ENCODE measurements at regions of chr16 and their contacts with region 1.

Region 1: DNA sequence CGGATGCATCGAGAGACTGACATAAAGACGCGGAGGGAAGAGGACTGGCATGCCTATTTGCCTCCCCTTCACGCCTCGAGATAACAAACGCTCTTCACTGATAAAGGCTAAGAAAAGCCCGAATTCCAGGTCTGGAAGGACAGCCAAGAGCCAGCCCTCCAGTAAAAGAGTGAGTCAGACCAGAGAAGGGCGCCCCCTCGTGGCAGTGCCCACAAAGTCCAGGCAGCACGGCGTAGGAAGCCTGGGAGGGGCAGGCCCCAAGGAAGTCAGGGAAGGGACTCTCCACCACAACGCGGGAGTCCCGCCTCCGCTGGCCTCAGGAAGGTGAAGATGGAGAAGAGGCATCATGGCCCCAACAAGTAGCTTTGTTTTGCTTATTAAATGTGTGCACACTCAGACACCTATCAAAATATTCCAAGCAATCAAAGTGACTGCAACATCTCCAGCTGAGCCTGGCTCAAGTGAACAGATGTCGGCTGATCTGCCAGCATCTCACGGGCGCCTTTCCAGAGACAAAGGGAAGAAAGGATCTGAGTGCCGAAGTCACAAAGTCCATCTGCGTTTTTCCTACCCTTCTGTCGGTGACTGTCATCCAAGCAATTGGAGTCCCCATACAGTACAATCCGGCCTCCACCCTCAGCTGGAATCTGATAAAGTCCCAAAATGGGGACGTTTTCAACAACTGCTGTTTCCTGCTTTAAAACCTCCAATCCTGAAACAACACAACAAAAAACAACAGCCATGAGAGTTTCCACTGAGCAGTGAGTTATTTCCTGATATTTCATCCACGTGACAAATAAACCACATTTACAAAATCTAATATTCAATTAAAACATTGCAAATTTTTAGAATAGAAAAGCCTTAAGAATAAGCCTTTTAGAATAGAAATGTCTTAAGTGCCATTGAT is 20.4 kb upstream of the SLC38A8 start:
- DNase-seq: peak; percentile 85
- ATAC-seq: peak; percentile 94
- H3K4me3 Mint-ChIP-seq: no peak overlapping the region
- H3K27ac Mint-ChIP-seq: no peak overlapping the region
- H3K4me1 Mint-ChIP-seq: no peaks in the 10 kb centered on the region
- H3K27me3 Mint-ChIP-seq: no peaks in the 10 kb centered on the region

Region 2: GRCh38 chr16:83826146-83826913 is 236.7 kb before region 1 on chr16:
- CTCF ChIA-PET with region 1: interaction called, 6 read pairs
- POLR2A ChIA-PET with region 1: no interaction called
- intact Hi-C with region 1: loop called (anchors 1 to 10 kb)
- DNase-seq: peak; percentile 89
- ATAC-seq: peak; percentile 97
- H3K4me3 Mint-ChIP-seq: no peak overlapping the region
- H3K27ac Mint-ChIP-seq: no peak overlapping the region
- H3K4me1 Mint-ChIP-seq: peaks cover 4% of the 10 kb centered on the region
- H3K27me3 Mint-ChIP-seq: peaks cover 2% of the 10 kb centered on the region

Region 3: GRCh38 chr16:83926726-83927397 is 136.1 kb before region 1 on chr16:
- CTCF ChIA-PET with region 1: interaction called, 7 read pairs
- POLR2A ChIA-PET with region 1: no interaction called
- intact Hi-C with region 1: loop called in 1 of 2 experiments (anchors 1 kb)
- DNase-seq: peak; percentile 81
- ATAC-seq: peak; percentile 93
- H3K4me3 Mint-ChIP-seq: no peak overlapping the region
- H3K27ac Mint-ChIP-seq: no peak overlapping the region
- H3K4me1 Mint-ChIP-seq: no peaks in the 10 kb centered on the region
- H3K27me3 Mint-ChIP-seq: no peaks in the 10 kb centered on the region

Region 4: DNA sequence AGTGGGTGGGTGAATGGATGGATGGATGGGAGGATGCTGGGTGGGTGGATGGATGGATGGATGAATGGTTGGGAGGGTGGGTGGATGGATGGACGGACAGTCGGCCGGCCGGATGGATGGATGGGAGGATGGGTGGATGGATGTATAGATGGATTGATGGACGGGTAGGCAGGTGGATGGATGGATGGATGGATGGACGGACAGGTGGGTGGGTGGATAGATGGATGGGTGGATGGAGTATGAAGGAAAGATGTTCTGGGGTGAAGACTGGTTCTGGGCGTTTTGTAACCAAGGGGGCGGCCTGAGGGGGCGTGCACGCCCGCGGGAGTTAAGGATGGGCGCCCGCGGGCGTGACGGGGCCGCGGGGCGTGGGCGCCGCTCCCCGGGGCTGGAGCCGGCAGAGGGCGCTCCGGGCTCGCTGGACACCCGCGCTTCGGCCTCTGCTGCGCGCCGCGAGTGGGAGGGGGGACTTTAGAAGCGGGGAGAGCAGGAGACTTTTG is 95.1 kb before region 1 on chr16 and contains the start of gene NECAB2:
- CTCF ChIA-PET with region 1: interaction called, 3 read pairs
- POLR2A ChIA-PET with region 1: no interaction called
- intact Hi-C with region 1: loop called (anchors 1 to 5 kb)
- DNase-seq: peak; percentile 44
- ATAC-seq: peak; percentile 42
- H3K4me3 Mint-ChIP-seq: no peak within 1 kb of the TSS
- H3K27ac Mint-ChIP-seq: no peak within 1 kb of the TSS
- H3K4me1 Mint-ChIP-seq: no peaks in the 10 kb centered on the region
- H3K27me3 Mint-ChIP-seq: peaks cover 16% of the 10 kb centered on the region
- total RNA-seq, gene NECAB2: not detected